ENCODE measurements at regions of chr2 and their contacts with region 1.

Region 1: DNA sequence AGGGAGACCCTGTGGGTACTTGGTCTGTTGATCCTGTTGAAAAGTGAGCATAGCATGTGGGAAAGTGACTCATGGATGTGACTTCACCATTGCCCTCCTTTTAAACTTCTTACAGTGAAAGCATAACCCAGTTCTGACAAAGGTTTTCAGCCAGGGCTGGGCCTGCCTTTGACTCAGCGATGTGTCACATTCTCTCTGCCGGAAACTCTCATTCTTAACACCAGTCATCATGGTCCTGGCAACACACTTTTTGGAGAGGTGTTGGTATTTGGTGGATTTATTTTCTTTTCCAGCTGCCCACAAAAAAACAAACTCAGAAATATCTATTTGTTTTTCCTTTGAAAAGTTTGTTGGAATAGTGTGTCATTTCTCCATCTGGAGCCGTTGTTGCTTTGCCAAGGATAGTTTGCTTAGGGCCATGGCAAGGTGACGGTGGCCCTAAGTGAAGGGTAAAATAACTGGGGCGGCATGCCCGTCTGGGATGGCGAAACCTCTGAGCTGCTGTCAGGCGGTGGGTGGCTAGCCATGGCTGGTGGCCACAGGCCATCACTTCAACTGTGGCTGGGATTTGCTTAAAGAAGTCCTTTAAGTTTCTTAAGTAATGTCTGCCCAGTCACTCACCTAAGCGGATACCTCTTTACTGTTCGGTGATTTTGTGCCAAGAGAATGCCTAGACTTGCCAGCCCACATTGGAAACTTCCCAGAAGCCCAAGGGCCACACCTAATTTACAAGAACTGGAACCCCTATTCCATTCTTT is 123.3 kb downstream of the LTBP1 start:
- DNase-seq: peak; percentile 85
- ATAC-seq: peak; percentile 93
- H3K4me3 ChIP-seq: no peak overlapping the region
- H3K27ac ChIP-seq: peak overlapping the region; percentile 72 to 98
- H3K4me1 ChIP-seq: peaks cover 6 to 10% of the 10 kb centered on the region in 2 donors
- H3K27me3 ChIP-seq: no peaks in the 10 kb centered on the region

Region 2: GRCh38 chr2:32937602-32938448 is 132.2 kb before region 1 on chr2:
- intact Hi-C with region 1: no loop called
- DNase-seq: no peak
- ATAC-seq: no peak
- H3K4me3 ChIP-seq: no peak overlapping the region
- H3K27ac ChIP-seq: no peak overlapping the region
- H3K4me1 ChIP-seq: peaks cover 0 to 2% of the 10 kb centered on the region in 2 donors
- H3K27me3 ChIP-seq: no peaks in the 10 kb centered on the region

Region 3: DNA sequence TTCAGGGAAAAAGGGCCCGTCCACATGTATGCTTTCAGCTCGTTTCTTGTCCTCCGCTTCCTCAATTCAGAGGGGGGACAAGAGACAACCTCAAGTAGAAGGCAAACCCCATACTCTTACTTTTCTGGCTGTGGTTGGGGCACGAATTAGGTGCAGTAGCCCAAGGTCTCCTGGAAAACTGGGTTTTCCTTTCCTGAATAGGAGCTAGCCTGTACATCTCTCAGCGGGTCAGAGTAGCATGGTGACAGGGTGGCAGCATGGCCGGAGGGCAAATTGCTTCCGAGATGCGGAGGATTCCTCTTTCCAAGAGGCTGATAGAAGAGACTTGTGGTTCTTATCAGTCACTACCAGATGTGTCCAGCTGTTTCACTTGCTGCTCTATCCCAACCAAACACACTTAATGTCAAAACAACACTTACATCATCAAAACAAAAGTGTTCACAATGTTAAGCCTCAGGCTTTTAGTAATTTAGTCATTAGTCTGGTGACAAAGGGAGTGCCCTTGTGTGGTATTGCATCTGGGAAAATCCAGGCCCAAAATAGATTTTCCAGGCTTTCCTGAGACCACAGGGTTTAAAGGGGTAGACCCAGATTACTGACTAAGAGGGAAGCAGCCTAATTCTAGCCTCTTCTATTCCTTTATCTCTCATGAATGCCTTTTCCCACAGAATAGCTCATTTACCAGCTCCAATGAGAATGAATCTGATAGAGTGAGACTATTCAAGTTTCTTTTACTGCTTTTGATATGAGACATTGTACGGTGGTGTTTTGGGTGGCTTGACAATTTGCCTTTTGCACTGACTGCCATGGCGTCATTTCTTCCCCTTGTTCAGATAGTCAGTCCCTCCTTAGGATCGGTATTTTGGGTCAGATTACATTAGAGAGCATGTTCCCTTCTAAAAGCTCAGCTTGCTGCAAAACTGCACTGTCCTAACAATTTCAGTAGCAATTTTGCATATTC is 38.7 kb after region 1 on chr2:
- intact Hi-C with region 1: loop called in 1 of 2 experiments (anchors 5 kb)
- DNase-seq: no peak
- ATAC-seq: peak; percentile 49
- H3K4me3 ChIP-seq: peak overlapping the region in 1 of 2 donors; percentile 20
- H3K27ac ChIP-seq: peak overlapping the region; percentile 37 to 85
- H3K4me1 ChIP-seq: peaks cover 10 to 20% of the 10 kb centered on the region in 2 donors
- H3K27me3 ChIP-seq: no peaks in the 10 kb centered on the region

Region 4: DNA sequence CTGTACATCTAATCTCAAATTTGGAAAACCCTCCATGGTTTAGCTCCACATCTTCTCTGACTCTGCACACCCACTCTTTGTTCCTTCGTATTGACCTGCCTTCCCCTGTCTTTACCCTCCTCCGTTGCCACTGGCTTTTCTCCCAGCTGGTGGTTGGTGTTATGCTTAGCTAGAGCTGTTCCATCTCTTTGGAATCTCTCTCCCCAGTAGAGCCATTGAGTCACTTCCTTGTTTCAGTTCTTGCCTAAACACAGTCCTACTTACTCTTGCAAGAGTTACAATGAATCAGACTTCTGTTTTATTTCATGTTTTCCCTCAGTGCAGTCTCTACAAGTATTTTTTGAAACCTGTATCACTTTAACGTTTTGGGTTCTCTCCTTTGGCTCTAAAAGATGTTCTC is 140.6 kb after region 1 on chr2:
- intact Hi-C with region 1: loop called (anchors 5 to 10 kb)
- DNase-seq: peak; percentile 82 to 84
- ATAC-seq: peak; percentile 78
- H3K4me3 ChIP-seq: no peak overlapping the region
- H3K27ac ChIP-seq: peak overlapping the region in 1 of 2 donors; percentile 37
- H3K4me1 ChIP-seq: peaks cover 12 to 21% of the 10 kb centered on the region in 2 donors
- H3K27me3 ChIP-seq: no peaks in the 10 kb centered on the region

Region 5: DNA sequence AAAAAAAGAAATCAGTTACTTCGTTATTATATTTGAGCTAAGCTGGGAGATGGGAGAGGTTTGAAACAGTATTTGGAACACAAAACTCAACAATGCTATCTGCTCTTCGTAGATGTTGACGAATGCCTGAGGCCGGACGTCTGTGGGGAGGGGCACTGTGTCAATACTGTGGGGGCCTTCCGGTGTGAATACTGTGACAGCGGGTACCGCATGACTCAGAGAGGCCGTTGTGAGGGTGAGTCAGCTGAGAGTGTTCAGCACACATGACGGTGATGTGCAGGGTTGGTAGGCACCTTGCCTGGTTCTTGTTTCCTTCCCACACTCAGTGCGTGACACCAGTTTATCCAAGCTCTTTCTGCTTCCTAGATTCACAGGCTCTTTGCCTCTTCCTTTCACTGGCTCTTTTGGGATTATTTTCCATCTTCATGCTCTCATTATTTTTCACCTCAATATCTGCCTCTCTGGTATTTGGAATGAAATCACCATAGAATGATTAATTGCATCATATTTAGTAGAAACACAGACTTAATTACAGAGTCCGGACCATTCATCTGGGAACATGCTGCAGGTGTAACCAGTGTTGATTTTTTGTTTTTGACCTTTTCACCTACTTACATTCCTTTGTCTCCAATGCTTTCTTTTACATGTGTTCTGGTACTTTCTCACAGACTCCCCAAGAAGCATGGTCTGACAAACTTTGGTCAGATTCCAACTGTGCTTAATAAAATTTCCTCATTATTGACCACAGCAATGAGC is 205.8 kb after region 1 on chr2:
- intact Hi-C with region 1: loop called in 1 of 2 experiments (anchors 10 kb)
- DNase-seq: peak; percentile 86 to 88
- ATAC-seq: peak; percentile 77
- H3K4me3 ChIP-seq: no peak overlapping the region
- H3K27ac ChIP-seq: peak overlapping the region; percentile 58 to 85
- H3K4me1 ChIP-seq: peaks cover 2 to 3% of the 10 kb centered on the region in 2 donors
- H3K27me3 ChIP-seq: no peaks in the 10 kb centered on the region

Region 6: GRCh38 chr2:33354981-33355380 is 284.9 kb after region 1 on chr2:
- intact Hi-C with region 1: no loop called
- DNase-seq: no peak
- ATAC-seq: no peak
- H3K4me3 ChIP-seq: no peak overlapping the region
- H3K27ac ChIP-seq: peak overlapping the region in 1 of 2 donors; percentile 11
- H3K4me1 ChIP-seq: no peaks in the 10 kb centered on the region
- H3K27me3 ChIP-seq: no peaks in the 10 kb centered on the region

Measured in aorta (tissue), 5 donors.